HCT116 (cell line): ENCODE measurements at regions of chr15 and their contacts with region 1.

Region 1: DNA sequence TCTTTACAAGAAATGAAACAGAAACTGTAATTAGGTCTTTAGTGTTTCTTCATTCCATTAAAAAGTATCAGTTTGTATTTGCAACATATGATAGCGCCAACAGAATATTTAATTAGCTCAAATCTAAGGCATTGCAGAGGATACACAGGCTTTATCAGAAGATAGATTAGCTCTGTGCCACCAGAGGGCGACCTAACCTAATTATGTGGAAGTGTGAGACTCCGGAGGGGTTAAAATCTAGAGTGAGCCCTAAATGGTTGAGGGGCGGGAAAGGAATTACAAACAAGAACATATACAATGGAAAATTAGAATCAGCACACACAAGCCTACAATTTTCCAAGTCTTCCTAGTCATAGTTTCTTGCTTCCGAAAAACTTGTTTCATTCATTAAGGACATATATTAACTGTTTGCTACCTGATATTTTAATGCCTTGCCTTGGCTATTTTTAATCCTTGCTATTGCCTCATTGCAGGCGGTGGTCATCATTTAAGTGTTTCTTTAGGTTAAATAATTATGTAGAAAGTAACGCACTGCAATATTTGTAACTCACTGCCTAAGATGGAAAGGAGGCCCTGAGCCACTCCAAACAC is 18.0 kb upstream of the RYR3 start:
- DNase-seq: peak; percentile 51
- ATAC-seq: peak; percentile 92
- H3K4me3 ChIP-seq: no peak overlapping the region
- H3K27ac ChIP-seq: no peak overlapping the region
- H3K4me1 ChIP-seq: peaks cover 0 to 5% of the 10 kb centered on the region in 2 experiments; a peak in 1 of 4 replicates
- H3K27me3 ChIP-seq: peaks cover 31% of the 10 kb centered on the region
- CTCF ChIP-seq: peak; percentile 39 to 89 (median 57); a peak in 5 of 6 replicates
- POLR2A ChIP-seq: no peak
- RAD21 ChIP-seq: peak; percentile 67

Region 2: GRCh38 chr15:33126559-33127290 is 166.1 kb before region 1 on chr15:
- CTCF ChIA-PET with region 1: no interaction called
- POLR2A ChIA-PET with region 1: no interaction called
- RAD21 ChIA-PET with region 1: no interaction called
- intact Hi-C with region 1: no loop called
- DNase-seq: peak; percentile 72
- ATAC-seq: peak; percentile 87
- H3K4me3 ChIP-seq: peak overlapping the region in 1 of 2 experiments; percentile 21; a peak in 3 of 4 replicates
- H3K27ac ChIP-seq: peak overlapping the region; percentile 56; the same call in 1 of the 2 replicates
- H3K4me1 ChIP-seq: peaks cover 16 to 19% of the 10 kb centered on the region in 2 experiments
- H3K27me3 ChIP-seq: no peaks in the 10 kb centered on the region
- CTCF ChIP-seq: no peak
- POLR2A ChIP-seq: no peak
- RAD21 ChIP-seq: no peak

Region 3: DNA sequence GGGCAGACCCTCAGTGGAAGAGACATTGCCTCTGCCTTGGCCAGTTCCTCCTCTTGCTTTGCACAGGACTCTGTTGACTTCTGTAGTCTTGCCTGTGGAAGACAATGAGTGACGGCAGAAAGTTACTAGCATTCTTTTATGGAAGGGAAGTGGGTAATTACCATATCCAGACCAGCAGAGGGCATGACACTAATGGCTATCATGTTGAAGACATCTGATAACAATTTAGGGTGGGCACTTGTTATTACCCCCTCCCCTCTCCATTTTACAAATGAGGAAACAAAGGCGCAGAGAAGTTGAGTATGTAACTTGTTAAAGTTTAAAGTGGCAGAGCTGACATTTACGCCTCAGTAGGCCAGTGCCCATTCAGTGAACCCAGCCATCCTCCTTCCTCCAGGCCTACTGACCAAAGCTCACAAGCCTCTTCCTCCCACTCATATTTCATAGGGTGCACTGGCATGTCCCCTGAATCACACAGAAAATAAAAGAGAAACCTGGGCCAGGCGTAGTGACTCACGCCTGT is 50.1 kb before region 1 on chr15:
- CTCF ChIA-PET with region 1: interaction called, 12 read pairs
- POLR2A ChIA-PET with region 1: no interaction called
- RAD21 ChIA-PET with region 1: no interaction called
- intact Hi-C with region 1: no loop called
- DNase-seq: no peak
- ATAC-seq: peak; percentile 74
- H3K4me3 ChIP-seq: no peak overlapping the region
- H3K27ac ChIP-seq: no peak overlapping the region
- H3K4me1 ChIP-seq: peaks cover 0 to 30% of the 10 kb centered on the region in 2 experiments; a peak in 3 of 4 replicates
- H3K27me3 ChIP-seq: peaks cover 3% of the 10 kb centered on the region; the same call in 1 of the 2 replicates
- CTCF ChIP-seq: peak; percentile 28 to 77 (median 66); a peak in 5 of 6 replicates
- POLR2A ChIP-seq: no peak
- RAD21 ChIP-seq: peak; percentile 50; the same call in 1 of the 2 replicates

Region 4: GRCh38 chr15:33278816-33279612 is 13.8 kb before region 1 on chr15:
- CTCF ChIA-PET with region 1: interaction called, 32 read pairs
- POLR2A ChIA-PET with region 1: no interaction called
- RAD21 ChIA-PET with region 1: interaction called in 1 of 2 experiments, 3 read pairs
- intact Hi-C with region 1: no loop called
- DNase-seq: peak; percentile 92
- ATAC-seq: peak; percentile 99
- H3K4me3 ChIP-seq: peak overlapping the region in 1 of 2 experiments; percentile 5; a peak in 1 of 4 replicates
- H3K27ac ChIP-seq: peak overlapping the region; percentile 42; the same call in 1 of the 2 replicates
- H3K4me1 ChIP-seq: peaks cover 15 to 18% of the 10 kb centered on the region in 2 experiments
- H3K27me3 ChIP-seq: no peaks in the 10 kb centered on the region
- CTCF ChIP-seq: peak in 2 of 3 experiments; percentile 18 to 28; a peak in 2 of 6 replicates
- POLR2A ChIP-seq: no peak
- RAD21 ChIP-seq: no peak

Region 5: GRCh38 chr15:33608714-33609113 is 315.9 kb after region 1 on chr15:
- CTCF ChIA-PET with region 1: interaction called, 7 read pairs
- POLR2A ChIA-PET with region 1: no interaction called
- RAD21 ChIA-PET with region 1: no interaction called
- intact Hi-C with region 1: loop called (anchors 5 kb)
- DNase-seq: no peak
- ATAC-seq: peak; percentile 36; the same call in 1 of the 2 replicates
- H3K4me3 ChIP-seq: no peak overlapping the region
- H3K27ac ChIP-seq: no peak overlapping the region
- H3K4me1 ChIP-seq: no peaks in the 10 kb centered on the region
- H3K27me3 ChIP-seq: peaks cover 44% of the 10 kb centered on the region
- CTCF ChIP-seq: peak; percentile 17 to 49 (median 23); a peak in 5 of 6 replicates
- POLR2A ChIP-seq: no peak
- RAD21 ChIP-seq: peak; percentile 28; the same call in 1 of the 2 replicates

Region 6: DNA sequence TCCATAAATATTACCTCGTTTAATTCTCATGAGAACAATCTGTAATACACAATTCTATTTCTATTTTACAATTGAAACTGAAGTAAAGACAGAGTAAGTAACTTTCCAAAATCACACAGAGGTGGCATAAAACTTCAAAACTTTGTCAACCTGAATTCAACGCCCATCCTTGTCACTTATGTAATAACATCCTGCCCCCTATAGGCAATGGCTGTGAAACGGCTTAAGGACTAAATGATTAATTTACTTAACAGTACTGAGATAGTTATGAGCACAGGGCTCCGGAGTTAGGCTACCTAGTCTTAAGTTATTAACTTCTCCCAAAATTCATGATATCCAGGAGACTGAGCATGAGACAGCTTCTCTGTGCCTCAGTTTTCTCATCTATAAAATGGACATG is 382.4 kb after region 1 on chr15:
- CTCF ChIA-PET with region 1: interaction called, 13 read pairs
- POLR2A ChIA-PET with region 1: no interaction called
- RAD21 ChIA-PET with region 1: no interaction called
- intact Hi-C with region 1: loop called (anchors 1 kb)
- DNase-seq: peak; percentile 26
- ATAC-seq: peak; percentile 70; the same call in 1 of the 2 replicates
- H3K4me3 ChIP-seq: no peak overlapping the region
- H3K27ac ChIP-seq: no peak overlapping the region
- H3K4me1 ChIP-seq: no peaks in the 10 kb centered on the region
- H3K27me3 ChIP-seq: peaks cover 85% of the 10 kb centered on the region
- CTCF ChIP-seq: peak; percentile 16 to 73 (median 62); a peak in 5 of 6 replicates
- POLR2A ChIP-seq: no peak
- RAD21 ChIP-seq: peak; percentile 46

Region 7: DNA sequence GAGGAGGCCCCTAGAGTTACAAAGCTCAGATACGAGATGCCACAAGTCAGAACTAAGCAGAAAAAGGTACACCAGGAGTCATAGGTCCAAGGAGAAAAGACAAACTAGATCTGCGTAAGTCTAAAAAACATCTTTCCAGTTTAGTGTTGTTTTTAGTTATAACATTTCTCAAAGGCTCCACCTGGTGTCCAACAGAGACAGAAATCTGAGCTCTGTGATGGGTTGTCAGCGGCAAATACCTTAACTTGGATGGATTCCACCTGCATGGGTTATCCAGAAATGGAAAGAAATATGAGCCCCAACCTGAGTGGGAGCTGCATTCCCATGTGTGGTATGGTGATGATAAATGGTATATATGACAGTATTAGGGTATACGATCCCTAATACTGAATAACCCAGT is 436.8 kb after region 1 on chr15:
- CTCF ChIA-PET with region 1: interaction called, 47 read pairs
- POLR2A ChIA-PET with region 1: interaction called, 3 read pairs
- RAD21 ChIA-PET with region 1: interaction called in 1 of 2 experiments, 6 read pairs
- intact Hi-C with region 1: no loop called
- DNase-seq: peak; percentile 6
- ATAC-seq: peak; percentile 59; the same call in 1 of the 2 replicates
- H3K4me3 ChIP-seq: no peak overlapping the region
- H3K27ac ChIP-seq: no peak overlapping the region
- H3K4me1 ChIP-seq: no peaks in the 10 kb centered on the region
- H3K27me3 ChIP-seq: 0 out of 2 replicates have a peak, but pooled peaks cover 4% of the 10 kb centered on the region
- CTCF ChIP-seq: peak; percentile 7 to 43 (median 25); a peak in 3 of 6 replicates
- POLR2A ChIP-seq: no peak
- RAD21 ChIP-seq: peak; percentile 28; the same call in 1 of the 2 replicates

Region 8: GRCh38 chr15:33737687-33738601 is 445.1 kb after region 1 on chr15:
- CTCF ChIA-PET with region 1: interaction called, 14 read pairs
- POLR2A ChIA-PET with region 1: no interaction called
- RAD21 ChIA-PET with region 1: no interaction called
- intact Hi-C with region 1: no loop called
- DNase-seq: peak; percentile 16
- ATAC-seq: peak; percentile 89
- H3K4me3 ChIP-seq: no peak overlapping the region
- H3K27ac ChIP-seq: no peak overlapping the region
- H3K4me1 ChIP-seq: no peaks in the 10 kb centered on the region
- H3K27me3 ChIP-seq: 0 out of 2 replicates have a peak, but pooled peaks cover 7% of the 10 kb centered on the region
- CTCF ChIP-seq: peak; percentile 35 to 84 (median 83); a peak in 5 of 6 replicates
- POLR2A ChIP-seq: no peak
- RAD21 ChIP-seq: peak; percentile 27